ENCODE measurements at regions of chr10 and their contacts with region 1.

Region 1: DNA sequence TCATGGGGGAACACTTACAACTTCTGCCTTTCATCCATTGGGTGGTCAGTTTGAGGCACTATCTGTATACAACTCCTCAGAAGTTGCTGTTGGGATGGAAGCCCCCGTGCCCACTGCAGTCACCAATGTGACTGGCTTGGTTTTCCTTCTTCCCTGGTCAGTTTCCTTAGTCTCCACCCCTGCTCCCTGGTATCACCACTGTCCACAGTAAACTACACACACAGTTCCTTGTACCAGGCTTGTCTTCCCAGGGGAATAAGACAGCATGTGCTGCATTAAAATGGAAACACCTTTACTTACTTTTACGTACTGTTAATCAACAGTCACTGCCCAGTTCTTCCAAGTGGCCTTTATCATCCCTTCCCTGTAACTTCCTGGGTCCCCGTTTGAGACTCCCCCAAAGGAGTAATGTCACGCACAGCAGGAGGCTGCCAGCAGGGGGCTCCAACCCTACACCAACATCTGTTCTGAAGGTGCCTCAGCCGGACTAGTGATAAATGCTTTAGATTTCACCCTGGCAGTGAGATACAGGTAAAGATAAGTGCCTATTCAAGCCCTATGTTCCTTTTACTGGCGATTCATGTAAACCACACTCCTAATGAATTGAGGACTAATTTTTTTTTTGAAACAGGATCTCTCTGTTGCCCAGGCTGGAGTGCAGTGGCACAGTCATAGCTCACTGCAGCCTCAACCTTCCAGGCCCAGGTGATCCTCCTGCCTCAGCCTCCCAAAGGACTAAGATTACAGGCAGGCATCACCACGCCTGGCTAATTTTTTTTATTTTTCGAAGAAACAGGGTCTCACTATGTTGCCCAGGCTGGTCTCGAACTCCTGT is 45.3 kb upstream of the PIK3AP1 start:
- DNase-seq: peak; percentile 69
- H3K4me3 Mint-ChIP-seq: no peak overlapping the region
- H3K27ac Mint-ChIP-seq: no peak overlapping the region
- H3K4me1 Mint-ChIP-seq: no peaks in the 10 kb centered on the region
- H3K27me3 Mint-ChIP-seq: no peaks in the 10 kb centered on the region
- CTCF ChIP-seq: peak; percentile 85

Region 2: DNA sequence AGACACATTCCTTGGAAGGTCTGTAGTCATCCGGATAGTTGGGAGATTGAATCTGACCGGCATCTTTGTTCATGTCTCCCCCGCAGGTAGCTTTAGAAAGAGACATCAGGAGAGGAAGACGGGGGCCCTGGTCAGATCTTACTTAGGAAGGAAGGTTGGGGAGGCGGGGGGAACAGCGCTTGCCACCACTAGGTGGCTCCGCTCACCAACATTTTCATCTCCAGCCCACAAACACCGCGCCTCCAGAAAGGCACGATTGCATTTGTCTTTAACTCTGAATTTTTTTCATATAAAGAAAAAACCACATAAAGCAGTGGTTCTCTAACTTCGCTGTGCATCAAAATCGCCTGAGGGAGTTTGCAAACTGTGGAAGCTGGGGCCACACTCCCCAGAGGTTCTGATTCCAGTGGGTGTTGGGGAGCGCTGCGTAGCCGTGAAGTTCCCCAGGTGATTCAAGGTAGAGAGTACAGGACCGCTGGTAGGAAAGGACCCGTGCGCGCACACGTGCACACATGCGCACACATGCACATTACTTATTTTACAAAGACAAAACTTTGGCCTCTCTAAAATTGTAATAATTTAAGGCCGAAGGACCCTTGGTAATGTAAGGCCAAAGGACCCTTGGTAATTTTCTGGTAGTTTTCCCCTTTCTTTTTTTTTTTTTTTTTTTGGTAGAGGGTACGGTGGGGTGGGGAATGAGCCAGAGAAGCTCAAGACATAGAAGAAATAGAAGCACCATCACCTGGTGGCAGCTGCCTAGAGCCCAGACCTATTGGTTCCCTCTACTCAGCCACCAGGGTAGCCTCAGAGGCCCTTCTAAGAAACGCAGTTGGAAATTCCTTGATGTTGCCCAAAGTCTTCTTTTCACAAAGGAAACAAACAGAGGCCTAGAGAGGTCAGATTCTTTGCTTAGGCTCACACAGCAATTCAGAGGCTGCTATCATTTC is 369.4 kb before region 1 on chr10:
- CTCF ChIA-PET with region 1: no interaction called
- POLR2A ChIA-PET with region 1: no interaction called
- intact Hi-C with region 1: loop called (anchors 10 kb)
- DNase-seq: peak; percentile 65
- H3K4me3 Mint-ChIP-seq: no peak overlapping the region
- H3K27ac Mint-ChIP-seq: no peak overlapping the region
- H3K4me1 Mint-ChIP-seq: no peaks in the 10 kb centered on the region
- H3K27me3 Mint-ChIP-seq: peaks cover 71% of the 10 kb centered on the region
- CTCF ChIP-seq: peak; percentile 76

Region 3: DNA sequence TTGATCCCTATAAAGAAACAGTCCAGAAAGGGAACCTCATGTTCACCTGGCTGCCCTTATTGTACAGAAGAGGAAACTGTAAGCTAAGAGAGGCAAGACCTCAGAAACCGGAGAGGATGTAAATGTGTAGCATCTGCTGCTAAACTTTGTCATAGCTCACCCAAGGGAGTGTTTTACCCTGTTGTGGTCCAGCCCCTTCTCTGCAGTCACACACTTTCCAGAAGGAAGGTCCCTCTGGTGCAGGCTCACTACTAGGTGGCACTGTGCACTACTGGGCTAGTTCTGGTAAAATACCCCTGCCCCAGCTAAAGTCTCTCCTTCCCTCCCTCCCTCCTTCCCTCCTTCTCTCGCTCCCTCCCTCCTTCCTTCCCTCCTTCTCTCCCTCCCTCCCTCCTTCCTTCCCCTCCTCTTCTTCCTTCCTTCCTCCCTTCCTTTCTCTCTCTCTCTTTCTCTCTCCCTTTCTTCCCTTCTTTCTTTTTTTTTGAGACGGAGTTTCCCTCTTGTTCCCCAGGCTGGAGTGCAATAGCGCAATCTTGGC is 24.0 kb after region 1 on chr10:
- CTCF ChIA-PET with region 1: interaction called, 13 read pairs
- POLR2A ChIA-PET with region 1: no interaction called
- intact Hi-C with region 1: no loop called
- DNase-seq: peak; percentile 56
- H3K4me3 Mint-ChIP-seq: no peak overlapping the region
- H3K27ac Mint-ChIP-seq: no peak overlapping the region
- H3K4me1 Mint-ChIP-seq: peaks cover 1% of the 10 kb centered on the region
- H3K27me3 Mint-ChIP-seq: peaks cover 23% of the 10 kb centered on the region
- CTCF ChIP-seq: peak; percentile 52

Region 4: GRCh38 chr10:97025613-97026242 is 260.1 kb after region 1 on chr10:
- CTCF ChIA-PET with region 1: no interaction called
- POLR2A ChIA-PET with region 1: no interaction called
- intact Hi-C with region 1: loop called (anchors 1 kb)
- DNase-seq: peak; percentile 76
- H3K4me3 Mint-ChIP-seq: no peak overlapping the region
- H3K27ac Mint-ChIP-seq: no peak overlapping the region
- H3K4me1 Mint-ChIP-seq: peaks cover 10% of the 10 kb centered on the region
- H3K27me3 Mint-ChIP-seq: peaks cover 15% of the 10 kb centered on the region
- CTCF ChIP-seq: peak; percentile 64

Measured in MCF 10A (cell line).